ENCODE measurements at regions of chr14 and their contacts with region 1.

Region 1: GRCh38 chr14:77314043-77314442 is 6.6 kb downstream of the POMT2 start:
- DNase-seq: no peak
- ATAC-seq: no peak
- H3K4me3 ChIP-seq: no peak overlapping the region
- H3K27ac ChIP-seq: no peak overlapping the region
- H3K4me1 ChIP-seq: no peaks in the 10 kb centered on the region
- H3K27me3 ChIP-seq: no peaks in the 10 kb centered on the region
- CTCF ChIP-seq: no peak
- EP300 ChIP-seq: no peak
- POLR2A ChIP-seq: no peak
- RAD21 ChIP-seq: no peak

Region 2: GRCh38 chr14:77133720-77134338 is 180.2 kb before region 1 on chr14:
- CTCF ChIA-PET with region 1: interaction called, 13 read pairs
- POLR2A ChIA-PET with region 1: no interaction called
- RAD21 ChIA-PET with region 1: no interaction called
- SMC1A ChIA-PET with region 1: interaction called, 7 read pairs
- in situ Hi-C with region 1: no loop called
- intact Hi-C with region 1: no loop called
- DNase-seq: no peak
- ATAC-seq: peak; percentile 92
- H3K4me3 ChIP-seq: no peak overlapping the region
- H3K27ac ChIP-seq: no peak overlapping the region
- H3K4me1 ChIP-seq: no peaks in the 10 kb centered on the region
- H3K27me3 ChIP-seq: peaks cover 11 to 13% of the 10 kb centered on the region in 2 experiments
- CTCF ChIP-seq: no peak
- EP300 ChIP-seq: no peak
- POLR2A ChIP-seq: no peak
- RAD21 ChIP-seq: no peak

Region 3: DNA sequence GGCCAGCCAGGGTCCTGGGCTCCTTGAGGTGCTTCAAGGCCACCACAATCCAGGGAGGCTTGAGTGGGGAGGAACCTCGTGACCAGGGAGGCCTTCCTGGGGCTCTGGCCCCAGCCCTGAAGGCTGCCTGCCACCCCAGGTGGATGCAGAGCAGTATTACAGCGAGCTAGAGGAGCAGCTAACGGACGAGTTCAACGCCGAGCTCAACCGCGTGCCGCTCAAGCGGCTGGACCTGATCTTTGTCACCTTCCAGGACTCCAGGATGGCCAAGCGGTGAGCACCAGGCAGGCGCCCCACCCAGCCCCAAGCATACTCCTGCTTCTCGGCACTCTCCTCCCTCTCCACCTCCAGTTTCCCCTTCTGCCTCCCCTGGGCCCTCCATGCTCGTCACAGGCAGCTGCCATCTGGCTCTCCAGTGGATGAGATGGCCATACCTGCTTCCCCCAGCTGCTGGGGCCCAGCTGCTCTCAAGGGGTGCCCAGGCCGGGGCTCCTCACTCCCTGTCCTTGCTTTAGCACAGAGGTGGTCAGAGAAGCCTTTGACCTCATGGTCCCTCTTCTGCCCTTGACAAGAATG is 73.6 kb before region 1 on chr14:
- CTCF ChIA-PET with region 1: interaction called, 12 read pairs
- POLR2A ChIA-PET with region 1: no interaction called
- RAD21 ChIA-PET with region 1: no interaction called
- SMC1A ChIA-PET with region 1: no interaction called
- in situ Hi-C with region 1: no loop called
- intact Hi-C with region 1: no loop called
- DNase-seq: no peak
- ATAC-seq: no peak
- H3K4me3 ChIP-seq: no peak overlapping the region
- H3K27ac ChIP-seq: no peak overlapping the region
- H3K4me1 ChIP-seq: no peaks in the 10 kb centered on the region
- H3K27me3 ChIP-seq: peaks cover 0 to 1% of the 10 kb centered on the region in 2 experiments; a peak in 2 of 4 replicates
- CTCF ChIP-seq: no peak
- EP300 ChIP-seq: no peak
- POLR2A ChIP-seq: no peak
- RAD21 ChIP-seq: no peak

Region 4: GRCh38 chr14:77327111-77327510 is 13.1 kb after region 1 on chr14:
- CTCF ChIA-PET with region 1: interaction called, 22 read pairs
- POLR2A ChIA-PET with region 1: no interaction called
- RAD21 ChIA-PET with region 1: interaction called, 4 read pairs
- SMC1A ChIA-PET with region 1: no interaction called
- in situ Hi-C with region 1: no loop called
- intact Hi-C with region 1: no loop called
- DNase-seq: no peak
- ATAC-seq: no peak
- H3K4me3 ChIP-seq: no peak overlapping the region
- H3K27ac ChIP-seq: no peak overlapping the region
- H3K4me1 ChIP-seq: peaks cover 4% of the 10 kb centered on the region; the same call in 1 of the 2 replicates
- H3K27me3 ChIP-seq: no peaks in the 10 kb centered on the region
- CTCF ChIP-seq: no peak
- EP300 ChIP-seq: no peak
- POLR2A ChIP-seq: no peak
- RAD21 ChIP-seq: no peak

Region 5: DNA sequence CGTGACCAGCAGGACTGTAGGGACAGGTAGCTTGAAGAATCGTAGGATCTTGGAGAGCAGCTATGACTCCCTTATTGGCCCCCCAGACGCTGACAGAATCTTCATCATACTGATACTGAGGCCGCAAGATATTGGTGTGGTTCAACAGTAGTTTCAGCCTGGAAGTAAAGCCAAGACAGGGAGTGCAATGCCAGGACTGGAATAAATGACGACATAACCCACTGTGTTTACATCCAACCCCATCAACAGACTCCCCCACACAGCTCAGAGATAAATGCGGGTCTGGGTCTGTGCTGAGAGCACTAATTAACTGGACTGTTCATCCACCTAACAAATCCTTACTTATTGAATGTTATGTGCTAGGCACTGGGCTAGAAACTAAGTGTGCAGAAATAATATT is 92.7 kb after region 1 on chr14:
- CTCF ChIA-PET with region 1: interaction called, 4 read pairs
- POLR2A ChIA-PET with region 1: no interaction called
- RAD21 ChIA-PET with region 1: interaction called, 12 read pairs
- SMC1A ChIA-PET with region 1: interaction called, 5 read pairs
- in situ Hi-C with region 1: no loop called
- intact Hi-C with region 1: no loop called
- DNase-seq: no peak
- ATAC-seq: no peak
- H3K4me3 ChIP-seq: no peak overlapping the region
- H3K27ac ChIP-seq: no peak overlapping the region
- H3K4me1 ChIP-seq: no peaks in the 10 kb centered on the region; the same call in 1 of the 2 replicates
- H3K27me3 ChIP-seq: no peaks in the 10 kb centered on the region
- CTCF ChIP-seq: no peak
- EP300 ChIP-seq: no peak
- POLR2A ChIP-seq: no peak
- RAD21 ChIP-seq: no peak

Region 6: GRCh38 chr14:77554207-77554606 is 240.2 kb after region 1 on chr14:
- CTCF ChIA-PET with region 1: interaction called, 26 read pairs
- POLR2A ChIA-PET with region 1: no interaction called
- RAD21 ChIA-PET with region 1: interaction called, 5 read pairs
- SMC1A ChIA-PET with region 1: interaction called, 6 read pairs
- in situ Hi-C with region 1: no loop called
- intact Hi-C with region 1: no loop called
- DNase-seq: peak; percentile 37
- ATAC-seq: peak; percentile 83
- H3K4me3 ChIP-seq: no peak overlapping the region
- H3K27ac ChIP-seq: peak overlapping the region; percentile 87
- H3K4me1 ChIP-seq: peaks cover 16% of the 10 kb centered on the region
- H3K27me3 ChIP-seq: no peaks in the 10 kb centered on the region
- CTCF ChIP-seq: no peak
- EP300 ChIP-seq: no peak
- POLR2A ChIP-seq: no peak
- RAD21 ChIP-seq: no peak

Region 7: GRCh38 chr14:77580477-77580876 is 266.4 kb after region 1 on chr14:
- CTCF ChIA-PET with region 1: no interaction called
- POLR2A ChIA-PET with region 1: no interaction called
- RAD21 ChIA-PET with region 1: no interaction called
- SMC1A ChIA-PET with region 1: no interaction called
- in situ Hi-C with region 1: no loop called
- intact Hi-C with region 1: no loop called
- DNase-seq: no peak
- ATAC-seq: peak; percentile 36
- H3K4me3 ChIP-seq: no peak overlapping the region
- H3K27ac ChIP-seq: 0 out of 2 replicates have a peak overlapping the region, but pooled peaks have one; percentile 6
- H3K4me1 ChIP-seq: peaks cover 4% of the 10 kb centered on the region
- H3K27me3 ChIP-seq: no peaks in the 10 kb centered on the region
- CTCF ChIP-seq: no peak
- EP300 ChIP-seq: no peak
- POLR2A ChIP-seq: no peak
- RAD21 ChIP-seq: no peak

Measured in GM12878 (cell line).